ENCODE measurements at regions of chr17 and their contacts with region 1.

Region 1: GRCh38 chr17:45293413-45294211 is 23.2 kb downstream of the MAP3K14 start:
- DNase-seq: peak; percentile 78 to 94
- H3K4me3 ChIP-seq: no peak overlapping the region
- H3K27ac ChIP-seq: peak overlapping the region; percentile 81 to 85
- H3K4me1 ChIP-seq: peaks cover 26 to 61% of the 10 kb centered on the region in 2 donors
- H3K27me3 ChIP-seq: no peaks in the 10 kb centered on the region
- CTCF ChIP-seq: peak in 1 of 3 experiments; percentile 21

Region 2: DNA sequence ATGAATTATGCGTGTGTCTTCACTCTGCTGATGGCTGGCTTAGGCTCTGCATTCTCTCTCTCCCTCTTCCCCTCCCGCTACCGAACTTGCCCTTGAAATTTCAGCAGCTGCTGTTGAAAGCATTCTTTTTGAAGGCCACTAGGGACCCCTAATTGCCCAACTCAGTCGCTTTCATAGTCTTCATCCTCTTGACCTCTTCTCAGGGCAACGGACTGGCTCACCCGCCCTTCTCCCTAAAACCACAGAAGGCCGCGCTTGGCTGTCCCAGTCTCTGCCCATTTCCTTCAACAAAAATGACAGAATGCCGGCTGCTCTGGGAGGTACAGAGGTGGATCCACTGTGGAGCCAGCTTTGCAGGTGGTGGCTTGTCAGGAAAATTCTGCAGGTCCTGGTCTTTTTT is 92.9 kb before region 1 on chr17:
- intact Hi-C with region 1: no loop called
- DNase-seq: no peak
- H3K4me3 ChIP-seq: no peak overlapping the region
- H3K27ac ChIP-seq: no peak overlapping the region
- H3K4me1 ChIP-seq: peaks cover 0 to 4% of the 10 kb centered on the region in 2 donors
- H3K27me3 ChIP-seq: no peaks in the 10 kb centered on the region
- CTCF ChIP-seq: no peak

Region 3: GRCh38 chr17:45307290-45308015 is 13.8 kb after region 1 on chr17:
- intact Hi-C with region 1: loop called (anchors 2 kb)
- DNase-seq: no peak
- H3K4me3 ChIP-seq: no peak overlapping the region
- H3K27ac ChIP-seq: peak overlapping the region; percentile 52 to 76
- H3K4me1 ChIP-seq: peaks cover 7 to 42% of the 10 kb centered on the region in 2 donors
- H3K27me3 ChIP-seq: no peaks in the 10 kb centered on the region
- CTCF ChIP-seq: no peak

Region 4: GRCh38 chr17:45371414-45372327 is 78.1 kb after region 1 on chr17:
- intact Hi-C with region 1: loop called (anchors 5 kb)
- DNase-seq: peak in 1 of 2 donors; percentile 93
- H3K4me3 ChIP-seq: peak overlapping the region; percentile 46 to 50
- H3K27ac ChIP-seq: peak overlapping the region; percentile 64 to 73
- H3K4me1 ChIP-seq: peaks cover 5 to 24% of the 10 kb centered on the region in 2 donors
- H3K27me3 ChIP-seq: no peaks in the 10 kb centered on the region
- CTCF ChIP-seq: no peak

Measured in ascending aorta (tissue), 2 donors.